A549 (cell line): ENCODE measurements at regions of chr2 and their contacts with region 1.

Region 1: DNA sequence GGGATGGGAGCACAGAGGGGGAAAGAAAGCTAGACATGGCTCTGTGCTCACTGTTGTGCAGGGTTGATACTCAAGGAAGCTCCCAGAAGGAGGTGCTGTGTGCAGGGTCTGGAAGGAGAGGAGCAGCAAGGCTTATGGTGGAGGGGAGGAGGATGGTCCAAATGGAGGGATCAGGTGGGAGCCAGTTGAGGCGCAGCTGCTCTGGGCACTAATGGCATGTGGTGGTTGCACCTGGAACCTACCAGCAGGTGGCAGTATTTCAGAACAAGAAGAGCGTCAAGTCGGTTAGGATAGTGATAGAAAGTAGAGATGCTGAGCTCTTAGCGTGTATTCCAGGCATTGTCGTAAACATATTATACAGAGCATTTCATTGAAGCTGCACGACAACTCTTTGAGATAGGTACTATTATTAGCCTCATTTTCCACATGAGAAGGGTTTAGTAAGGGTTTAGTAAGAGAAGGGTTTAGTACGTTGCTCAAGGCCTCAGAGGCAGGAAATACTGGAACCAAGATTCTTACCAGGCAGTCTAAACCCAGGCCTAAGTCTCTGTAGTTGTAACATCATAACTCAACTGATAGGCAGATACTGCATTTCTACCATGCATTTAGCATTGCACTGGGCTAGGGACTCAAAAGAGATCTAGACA is 223.7 kb downstream of the CYP26B1 start:
- DNase-seq: peak; percentile 77 to 83
- ATAC-seq: peak; percentile 78 to 94
- H3K4me3 ChIP-seq: no peak overlapping the region
- H3K27ac ChIP-seq: no peak overlapping the region
- H3K4me1 ChIP-seq: peaks cover 6% of the 10 kb centered on the region; the same call in 1 of the 3 replicates
- CTCF ChIP-seq: peak; percentile 93
- EP300 ChIP-seq: no peak
- POLR2A ChIP-seq: no peak
- RAD21 ChIP-seq: peak; percentile 87 to 89

Region 2: GRCh38 chr2:71950256-71951082 is 26.5 kb after region 1 on chr2:
- CTCF ChIA-PET with region 1: interaction called, 18 read pairs
- POLR2A ChIA-PET with region 1: no interaction called
- DNase-seq: no peak
- ATAC-seq: peak in 1 of 2 experiments; percentile 49; a peak in 3 of 6 replicates
- H3K4me3 ChIP-seq: no peak overlapping the region
- H3K27ac ChIP-seq: peak overlapping the region in 1 of 2 experiments; percentile 33; a peak in 1 of 6 replicates
- H3K4me1 ChIP-seq: 0 out of 3 replicates have a peak, but pooled peaks cover 8% of the 10 kb centered on the region
- CTCF ChIP-seq: no peak
- EP300 ChIP-seq: no peak
- POLR2A ChIP-seq: no peak
- RAD21 ChIP-seq: no peak

Region 3: DNA sequence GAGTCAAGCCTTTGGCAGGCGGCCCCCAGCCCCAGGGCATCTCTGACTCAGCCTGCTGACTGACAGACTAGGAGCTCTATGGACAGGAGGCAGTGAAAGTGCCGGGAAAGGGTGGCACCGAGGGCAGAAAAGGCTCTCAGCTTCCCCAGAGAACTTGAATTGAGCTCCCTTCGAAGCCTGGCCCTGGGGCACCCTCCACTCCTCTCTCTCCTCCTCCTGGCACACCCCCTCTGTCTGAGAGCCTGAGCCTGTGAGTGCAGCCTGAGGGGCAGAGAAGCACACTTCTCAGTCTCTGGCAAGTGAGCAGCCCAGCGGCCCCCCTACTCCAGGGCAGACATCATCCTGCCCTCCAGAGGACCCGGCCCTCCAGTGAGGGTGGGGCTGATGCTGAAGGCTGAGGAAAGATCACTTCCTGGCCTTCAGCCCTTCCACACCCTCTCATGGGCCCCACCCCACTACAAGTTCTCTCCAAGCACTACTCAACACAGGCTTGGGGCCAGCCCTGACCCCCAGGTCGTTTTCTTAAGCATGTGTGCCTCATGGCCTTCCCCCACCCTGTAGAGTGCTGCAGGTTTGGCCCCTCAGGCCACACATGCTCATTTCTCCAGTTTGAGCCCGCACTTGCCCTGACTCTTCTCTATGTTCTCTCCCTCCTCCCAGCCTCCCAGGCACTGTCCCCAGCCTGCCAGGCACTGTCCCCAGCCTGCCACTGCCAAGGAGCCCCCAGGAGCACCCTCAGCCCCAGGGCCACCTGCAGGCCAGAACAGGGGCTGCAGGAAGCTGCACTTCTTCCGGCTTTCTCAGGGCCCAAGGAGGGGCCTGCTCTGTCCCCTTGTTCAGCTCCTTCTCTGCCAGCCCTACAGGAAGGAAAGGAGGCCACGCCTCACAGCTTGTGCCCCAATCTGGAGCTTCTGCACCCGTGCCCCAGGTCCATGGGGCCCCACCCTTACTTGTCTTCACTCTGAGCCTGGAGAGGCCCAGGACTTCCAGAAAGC is 191.8 kb after region 1 on chr2:
- CTCF ChIA-PET with region 1: interaction called, 10 read pairs
- POLR2A ChIA-PET with region 1: no interaction called
- DNase-seq: peak; percentile 87 to 97
- ATAC-seq: peak; percentile 91 to 92
- H3K4me3 ChIP-seq: 0 out of 3 replicates have a peak overlapping the region, but pooled peaks have one; percentile 6
- H3K27ac ChIP-seq: peak overlapping the region; percentile 66 to 88
- H3K4me1 ChIP-seq: peaks cover 33% of the 10 kb centered on the region
- CTCF ChIP-seq: peak; percentile 31; the same call in 2 of the 3 replicates
- EP300 ChIP-seq: no peak
- POLR2A ChIP-seq: no peak
- RAD21 ChIP-seq: 0 out of 5 replicates have a peak, but pooled peaks of 1 of the 2 experiments have one; percentile 20

Region 4: GRCh38 chr2:72137498-72138010 is 213.5 kb after region 1 on chr2:
- CTCF ChIA-PET with region 1: interaction called, 31 read pairs
- POLR2A ChIA-PET with region 1: no interaction called
- DNase-seq: peak; percentile 64 to 88
- ATAC-seq: peak; percentile 70 to 91
- H3K4me3 ChIP-seq: no peak overlapping the region
- H3K27ac ChIP-seq: peak overlapping the region in 1 of 2 experiments; percentile 63; a peak in 3 of 6 replicates
- H3K4me1 ChIP-seq: peaks cover 27% of the 10 kb centered on the region
- CTCF ChIP-seq: peak; percentile 98
- EP300 ChIP-seq: no peak
- POLR2A ChIP-seq: no peak
- RAD21 ChIP-seq: peak; percentile 77 to 81

Region 5: DNA sequence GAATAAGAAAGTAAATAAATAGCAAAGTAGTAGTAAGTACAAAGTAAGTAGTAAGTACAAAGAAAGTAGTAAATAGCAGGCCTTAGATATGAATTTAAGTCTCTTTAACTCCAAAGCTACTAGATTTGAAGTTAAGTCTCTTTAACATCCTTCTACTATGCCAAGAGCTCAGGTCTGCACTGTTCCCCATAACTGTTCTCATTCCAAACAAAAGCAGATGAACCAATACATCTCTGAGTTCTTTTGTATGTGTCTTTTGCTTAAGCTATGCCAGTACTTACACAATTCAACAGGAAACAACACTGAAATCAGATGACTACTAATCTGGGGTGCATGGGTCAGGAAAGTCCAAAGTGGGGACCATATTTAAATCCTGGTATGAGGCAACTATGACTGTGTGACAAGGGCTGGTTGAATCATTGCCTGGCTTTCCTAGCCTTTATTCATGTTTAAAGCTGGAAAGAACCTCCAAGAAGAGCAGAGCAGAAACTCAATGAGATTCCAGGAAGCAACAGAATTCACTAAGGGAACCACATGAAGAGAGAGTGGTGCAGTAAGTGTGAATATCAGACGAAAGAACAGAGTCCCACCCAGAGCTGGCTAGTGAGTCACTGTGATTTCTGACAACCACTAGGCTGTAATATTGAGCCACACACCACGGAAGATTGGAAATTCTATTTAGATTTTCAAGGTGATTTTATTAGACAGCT is 274.7 kb after region 1 on chr2:
- CTCF ChIA-PET with region 1: no interaction called
- POLR2A ChIA-PET with region 1: no interaction called
- DNase-seq: peak; percentile 12 to 72
- ATAC-seq: peak; percentile 76 to 88
- H3K4me3 ChIP-seq: no peak overlapping the region
- H3K27ac ChIP-seq: peak overlapping the region; percentile 45 to 56; a peak in 5 of 6 replicates
- H3K4me1 ChIP-seq: peaks cover 32% of the 10 kb centered on the region
- CTCF ChIP-seq: peak; percentile 31
- EP300 ChIP-seq: no peak
- POLR2A ChIP-seq: no peak
- RAD21 ChIP-seq: peak; percentile 70 to 77

Region 6: DNA sequence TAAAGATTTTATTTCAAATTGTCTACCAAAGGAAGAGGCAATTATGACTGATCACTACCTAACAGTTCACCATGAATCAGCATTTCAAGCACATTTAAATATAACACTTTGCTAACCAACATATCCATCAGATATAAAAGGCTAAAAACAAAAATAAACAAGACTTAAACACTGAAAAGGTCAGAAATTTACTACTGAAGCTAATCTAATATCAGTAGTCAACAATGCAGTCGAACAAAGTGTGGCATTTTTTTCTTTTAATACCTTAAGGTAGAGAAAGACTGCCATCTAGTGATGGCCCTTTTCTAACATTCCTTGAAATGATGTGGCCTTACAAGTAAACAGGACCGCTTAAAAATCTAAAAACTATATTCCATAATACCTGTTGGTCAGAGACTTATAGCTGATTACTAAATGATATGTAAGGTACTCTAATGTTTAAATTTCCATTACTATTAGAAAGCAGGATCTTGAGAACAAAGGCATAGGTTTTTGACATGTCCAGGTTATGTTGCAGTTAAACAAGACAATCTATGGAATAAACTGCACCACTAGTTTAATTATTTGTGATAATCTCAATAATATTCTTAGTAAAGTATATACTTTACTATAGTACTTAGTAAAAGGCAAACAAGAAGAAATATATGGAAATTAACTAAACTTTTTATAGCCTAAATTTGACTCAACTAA is 821.8 kb after region 1 on chr2:
- CTCF ChIA-PET with region 1: interaction called, 20 read pairs
- POLR2A ChIA-PET with region 1: no interaction called
- DNase-seq: peak; percentile 40 to 87
- ATAC-seq: peak; percentile 66 to 80; a peak in 4 of 6 replicates
- H3K4me3 ChIP-seq: no peak overlapping the region
- H3K27ac ChIP-seq: peak overlapping the region; percentile 46 to 58; a peak in 4 of 6 replicates
- H3K4me1 ChIP-seq: peaks cover 39% of the 10 kb centered on the region
- CTCF ChIP-seq: peak; percentile 98
- EP300 ChIP-seq: no peak
- POLR2A ChIP-seq: no peak
- RAD21 ChIP-seq: peak; percentile 98